ENCODE measurements at regions of chr18 and their contacts with region 1.

Region 1: DNA sequence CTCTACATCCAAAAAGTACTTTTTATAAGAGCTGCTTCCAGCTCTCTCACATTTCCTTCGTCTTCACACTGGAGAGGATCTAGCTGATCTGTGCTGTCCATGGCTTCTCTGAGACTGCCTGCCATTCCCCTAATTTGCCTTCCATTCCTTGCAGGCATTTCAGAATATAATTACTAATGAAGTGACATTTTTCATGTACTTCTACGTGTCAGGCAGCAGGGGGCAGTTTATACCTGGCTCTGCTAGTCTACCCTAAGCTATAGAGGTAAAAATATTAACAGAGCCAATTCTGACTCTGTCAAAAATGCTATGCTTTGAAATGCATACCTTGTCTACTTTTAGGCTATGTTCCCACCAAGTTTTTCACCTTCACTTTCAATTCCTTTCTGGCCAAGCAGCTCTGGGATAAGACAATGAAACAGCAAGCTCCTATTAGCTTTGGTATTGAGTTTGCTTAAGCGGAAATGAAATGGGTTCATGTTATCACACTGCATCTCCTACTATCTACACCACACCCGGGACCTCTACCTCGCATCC is 81.9 kb downstream of the MEP1B start:
- DNase-seq: no peak
- H3K4me3 ChIP-seq: no peak overlapping the region
- H3K27ac ChIP-seq: peak overlapping the region in 1 of 2 donors; percentile 11
- H3K4me1 ChIP-seq: peaks cover 0 to 18% (median 13%) of the 10 kb centered on the region in 4 donors
- H3K27me3 ChIP-seq: no peaks in the 10 kb centered on the region
- CTCF ChIP-seq: peak; percentile 68 to 79

Region 2: GRCh38 chr18:32081881-32082280 is 189.9 kb before region 1 on chr18:
- intact Hi-C with region 1: no loop called
- DNase-seq: no peak
- H3K4me3 ChIP-seq: no peak overlapping the region
- H3K27ac ChIP-seq: no peak overlapping the region
- H3K4me1 ChIP-seq: no peaks in the 10 kb centered on the region
- H3K27me3 ChIP-seq: no peaks in the 10 kb centered on the region
- CTCF ChIP-seq: no peak

Region 3: GRCh38 chr18:32167975-32168730 is 103.6 kb before region 1 on chr18:
- intact Hi-C with region 1: loop called (anchors 10 kb)
- DNase-seq: no peak
- H3K4me3 ChIP-seq: no peak overlapping the region
- H3K27ac ChIP-seq: no peak overlapping the region
- H3K4me1 ChIP-seq: no peaks in the 10 kb centered on the region
- H3K27me3 ChIP-seq: no peaks in the 10 kb centered on the region
- CTCF ChIP-seq: no peak

Region 4: DNA sequence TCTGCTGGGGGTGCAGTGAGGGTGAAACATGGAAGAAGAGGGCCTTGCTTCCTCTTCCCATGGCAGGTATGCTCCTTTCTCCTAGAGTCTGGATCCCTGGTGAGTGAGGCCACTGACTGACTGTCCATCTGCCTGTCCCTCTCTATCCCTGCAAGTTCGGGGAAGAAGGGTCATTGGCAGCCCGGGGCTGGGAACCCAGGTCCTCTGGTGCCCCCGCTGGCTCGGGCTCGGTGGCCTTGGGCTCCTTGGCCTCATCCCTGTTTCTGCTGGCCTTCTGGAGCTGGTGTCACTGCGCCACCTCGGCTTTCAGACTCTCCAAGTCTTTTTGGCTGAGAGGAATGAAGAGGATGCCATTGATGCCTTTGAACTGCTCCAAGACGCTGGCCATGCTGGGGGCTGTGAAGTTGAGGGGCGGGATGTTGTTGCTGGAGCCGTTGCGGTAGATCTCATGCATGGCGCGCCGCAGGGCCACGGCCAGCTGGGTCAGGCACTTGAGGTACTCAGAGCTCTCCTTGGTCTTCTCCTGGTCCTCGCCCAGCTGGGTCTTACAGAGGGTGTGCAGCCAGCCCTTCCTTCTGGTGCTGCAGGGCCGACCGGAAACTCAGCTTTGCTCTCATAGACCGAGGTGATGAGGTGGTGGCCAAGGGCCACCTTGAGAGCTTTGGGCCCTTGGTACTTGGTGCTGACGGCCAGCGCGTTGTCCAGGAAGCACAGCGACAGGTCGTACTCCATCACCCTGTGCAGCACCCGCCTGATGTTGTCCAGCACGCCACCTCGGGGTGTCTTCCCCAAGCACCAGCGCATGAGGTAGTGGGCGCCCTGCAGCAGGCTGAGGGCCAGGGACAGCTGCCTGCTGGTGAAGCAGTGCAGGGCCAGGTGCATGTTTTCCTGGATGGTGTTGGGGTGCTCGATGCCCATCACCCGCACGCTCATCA is 75.6 kb before region 1 on chr18:
- intact Hi-C with region 1: no loop called
- DNase-seq: no peak
- H3K4me3 ChIP-seq: no peak overlapping the region
- H3K27ac ChIP-seq: no peak overlapping the region
- H3K4me1 ChIP-seq: no peaks in the 10 kb centered on the region
- H3K27me3 ChIP-seq: no peaks in the 10 kb centered on the region
- CTCF ChIP-seq: no peak